MCF 10A (cell line): ENCODE measurements at regions of chr4 and their contacts with region 1.

Region 1: GRCh38 chr4:138090150-138090917 is 151.8 kb downstream of the SLC7A11 start:
- DNase-seq: peak; percentile 90
- H3K4me3 Mint-ChIP-seq: peak overlapping the region; percentile 75
- H3K27ac Mint-ChIP-seq: no peak overlapping the region
- H3K4me1 Mint-ChIP-seq: peaks cover 7% of the 10 kb centered on the region
- H3K27me3 Mint-ChIP-seq: no peaks in the 10 kb centered on the region
- CTCF ChIP-seq: peak; percentile 58

Region 2: GRCh38 chr4:137226898-137227297 is 863.4 kb before region 1 on chr4:
- CTCF ChIA-PET with region 1: interaction called, 3 read pairs
- POLR2A ChIA-PET with region 1: no interaction called
- intact Hi-C with region 1: loop called (anchors 1 kb)
- DNase-seq: peak; percentile 49
- H3K4me3 Mint-ChIP-seq: no peak overlapping the region
- H3K27ac Mint-ChIP-seq: no peak overlapping the region
- H3K4me1 Mint-ChIP-seq: no peaks in the 10 kb centered on the region
- H3K27me3 Mint-ChIP-seq: no peaks in the 10 kb centered on the region
- CTCF ChIP-seq: peak; percentile 34

Region 3: DNA sequence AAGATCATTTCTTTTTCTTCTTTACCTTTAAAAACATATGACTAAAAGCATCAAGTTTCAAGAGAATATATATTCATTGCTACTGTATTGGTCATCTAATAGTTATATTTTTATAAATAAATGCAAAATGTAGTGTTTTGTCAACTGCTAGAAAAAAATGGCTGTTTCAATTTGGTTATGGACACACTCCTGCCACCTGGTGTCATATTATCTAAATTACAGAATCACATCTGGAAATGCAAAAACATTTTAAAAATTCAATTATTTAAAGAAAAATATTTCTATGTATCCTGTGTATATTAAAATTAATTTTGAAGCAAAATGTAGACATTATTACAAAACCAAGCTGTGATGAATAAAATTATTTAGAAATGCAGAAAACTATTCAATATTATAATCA is 228.7 kb before region 1 on chr4:
- CTCF ChIA-PET with region 1: interaction called, 3 read pairs
- POLR2A ChIA-PET with region 1: no interaction called
- intact Hi-C with region 1: loop called (anchors 5 kb)
- DNase-seq: peak; percentile 22
- H3K4me3 Mint-ChIP-seq: no peak overlapping the region
- H3K27ac Mint-ChIP-seq: no peak overlapping the region
- H3K4me1 Mint-ChIP-seq: no peaks in the 10 kb centered on the region
- H3K27me3 Mint-ChIP-seq: no peaks in the 10 kb centered on the region
- CTCF ChIP-seq: peak; percentile 47

Region 4: GRCh38 chr4:137890812-137891211 is 199.5 kb before region 1 on chr4:
- CTCF ChIA-PET with region 1: no interaction called
- POLR2A ChIA-PET with region 1: no interaction called
- intact Hi-C with region 1: no loop called
- DNase-seq: no peak
- H3K4me3 Mint-ChIP-seq: no peak overlapping the region
- H3K27ac Mint-ChIP-seq: no peak overlapping the region
- H3K4me1 Mint-ChIP-seq: no peaks in the 10 kb centered on the region
- H3K27me3 Mint-ChIP-seq: no peaks in the 10 kb centered on the region
- CTCF ChIP-seq: no peak

Region 5: DNA sequence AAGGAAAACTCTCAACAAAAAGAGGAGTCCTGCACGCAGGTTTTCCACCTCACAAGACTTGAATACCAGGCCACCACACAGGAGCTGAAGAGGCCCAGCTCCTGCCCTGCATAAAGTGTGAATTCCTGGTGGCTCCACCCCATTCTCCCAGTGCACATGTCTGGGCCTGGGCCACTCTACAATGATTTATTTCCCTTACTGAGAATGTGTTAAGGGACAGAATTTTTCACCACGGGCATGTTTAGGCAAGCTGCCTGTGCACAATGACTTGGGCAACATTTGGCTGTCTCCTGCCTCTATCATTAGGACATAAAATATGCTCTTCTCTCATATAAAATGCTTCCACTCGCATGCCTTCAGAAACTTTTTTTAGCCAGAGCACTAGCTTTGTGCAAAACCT is 45.3 kb before region 1 on chr4:
- CTCF ChIA-PET with region 1: interaction called, 205 read pairs
- POLR2A ChIA-PET with region 1: interaction called, 12 read pairs
- intact Hi-C with region 1: no loop called
- DNase-seq: peak; percentile 43
- H3K4me3 Mint-ChIP-seq: no peak overlapping the region
- H3K27ac Mint-ChIP-seq: peak overlapping the region; percentile 21
- H3K4me1 Mint-ChIP-seq: peaks cover 17% of the 10 kb centered on the region
- H3K27me3 Mint-ChIP-seq: no peaks in the 10 kb centered on the region
- CTCF ChIP-seq: no peak

Region 6: GRCh38 chr4:138078751-138079520 is 11.4 kb before region 1 on chr4:
- CTCF ChIA-PET with region 1: interaction called, 18 read pairs
- POLR2A ChIA-PET with region 1: no interaction called
- intact Hi-C with region 1: no loop called
- DNase-seq: no peak
- H3K4me3 Mint-ChIP-seq: no peak overlapping the region
- H3K27ac Mint-ChIP-seq: no peak overlapping the region
- H3K4me1 Mint-ChIP-seq: no peaks in the 10 kb centered on the region
- H3K27me3 Mint-ChIP-seq: no peaks in the 10 kb centered on the region
- CTCF ChIP-seq: no peak

Region 7: DNA sequence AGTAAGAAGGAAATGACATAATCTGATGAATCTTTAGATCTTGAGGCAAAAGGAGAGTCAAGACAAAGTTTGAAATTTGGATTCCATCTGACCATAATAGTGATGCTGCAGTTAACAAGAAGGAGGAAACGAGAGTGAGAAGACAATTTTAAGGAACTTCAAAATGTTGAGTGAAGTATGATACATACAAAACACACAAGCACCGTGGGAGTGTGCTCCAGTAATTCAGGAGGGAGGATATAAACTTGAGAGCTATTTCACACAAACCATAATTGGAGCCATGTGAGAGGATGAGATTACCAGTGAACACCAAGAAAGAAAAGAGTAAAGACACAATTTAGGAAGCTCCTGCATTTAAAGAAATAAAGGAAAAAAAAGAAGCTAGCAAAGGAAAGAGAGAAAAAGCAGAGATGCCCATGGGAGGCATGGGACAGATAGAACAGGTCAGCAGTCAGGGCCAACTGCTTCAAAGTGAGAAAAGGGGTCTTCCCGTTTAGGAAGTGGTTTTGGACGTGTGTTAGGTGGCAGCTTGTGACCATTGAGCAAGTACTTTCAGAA is 302.5 kb after region 1 on chr4:
- CTCF ChIA-PET with region 1: no interaction called
- POLR2A ChIA-PET with region 1: no interaction called
- intact Hi-C with region 1: no loop called
- DNase-seq: no peak
- H3K4me3 Mint-ChIP-seq: no peak overlapping the region
- H3K27ac Mint-ChIP-seq: no peak overlapping the region
- H3K4me1 Mint-ChIP-seq: no peaks in the 10 kb centered on the region
- H3K27me3 Mint-ChIP-seq: no peaks in the 10 kb centered on the region
- CTCF ChIP-seq: no peak

Region 8: GRCh38 chr4:138522366-138522765 is 432.0 kb after region 1 on chr4:
- CTCF ChIA-PET with region 1: interaction called, 3 read pairs
- POLR2A ChIA-PET with region 1: no interaction called
- intact Hi-C with region 1: loop called (anchors 1 kb)
- DNase-seq: peak; percentile 45
- H3K4me3 Mint-ChIP-seq: no peak overlapping the region
- H3K27ac Mint-ChIP-seq: no peak overlapping the region
- H3K4me1 Mint-ChIP-seq: no peaks in the 10 kb centered on the region
- H3K27me3 Mint-ChIP-seq: no peaks in the 10 kb centered on the region
- CTCF ChIP-seq: peak; percentile 52

Region 9: GRCh38 chr4:138870737-138871554 is 780.6 kb after region 1 on chr4:
- CTCF ChIA-PET with region 1: interaction called, 6 read pairs
- POLR2A ChIA-PET with region 1: no interaction called
- intact Hi-C with region 1: loop called (anchors 1 kb)
- DNase-seq: peak; percentile 81
- H3K4me3 Mint-ChIP-seq: no peak overlapping the region
- H3K27ac Mint-ChIP-seq: no peak overlapping the region
- H3K4me1 Mint-ChIP-seq: peaks cover 11% of the 10 kb centered on the region
- H3K27me3 Mint-ChIP-seq: no peaks in the 10 kb centered on the region
- CTCF ChIP-seq: peak; percentile 78